ENCODE measurements at regions of chr17 and their contacts with region 1.

Region 1: GRCh38 chr17:8337802-8338752 is 1.6 kb upstream of the ODF4 start:
- DNase-seq: no peak
- ATAC-seq: peak in 1 of 2 experiments; percentile 20; a peak in 2 of 6 replicates
- H3K4me3 ChIP-seq: no peak overlapping the region
- H3K27ac ChIP-seq: no peak overlapping the region
- H3K4me1 ChIP-seq: no peaks in the 10 kb centered on the region
- CTCF ChIP-seq: no peak
- EP300 ChIP-seq: no peak
- POLR2A ChIP-seq: no peak
- RAD21 ChIP-seq: no peak

Region 2: DNA sequence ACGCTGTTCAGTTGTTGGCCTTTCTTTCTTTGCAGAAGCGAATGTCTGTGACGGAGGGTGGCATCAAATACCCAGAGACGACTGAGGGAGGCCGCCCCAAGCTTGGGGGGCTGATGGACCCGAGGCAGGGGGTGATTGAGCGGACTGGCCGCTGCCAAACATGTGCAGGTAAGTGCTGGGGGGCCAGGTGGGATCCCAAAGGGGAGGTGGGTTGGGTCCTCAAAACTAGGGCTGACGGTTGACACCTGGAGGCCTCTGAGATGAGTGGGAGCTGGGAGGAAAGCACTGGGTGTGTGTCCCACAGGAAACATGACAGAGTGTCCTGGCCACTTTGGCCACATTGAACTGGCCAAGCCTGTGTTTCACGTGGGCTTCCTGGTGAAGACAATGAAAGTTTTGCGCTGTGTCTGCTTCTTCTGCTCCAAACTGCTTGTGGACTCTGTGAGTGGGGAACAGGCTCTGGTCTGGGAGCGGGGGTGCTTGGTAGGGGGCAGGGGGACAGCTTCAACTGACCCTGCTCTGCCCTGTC is 842.1 kb before region 1 on chr17:
- CTCF ChIA-PET with region 1: no interaction called
- POLR2A ChIA-PET with region 1: no interaction called
- DNase-seq: no peak
- ATAC-seq: no peak
- H3K4me3 ChIP-seq: no peak overlapping the region
- H3K27ac ChIP-seq: no peak overlapping the region
- H3K4me1 ChIP-seq: peaks cover 7% of the 10 kb centered on the region; the same call in 1 of the 3 replicates
- CTCF ChIP-seq: no peak
- EP300 ChIP-seq: no peak
- POLR2A ChIP-seq: no peak
- RAD21 ChIP-seq: no peak

Region 3: GRCh38 chr17:8255499-8255898 is 82.6 kb before region 1 on chr17:
- CTCF ChIA-PET with region 1: no interaction called
- POLR2A ChIA-PET with region 1: no interaction called
- DNase-seq: peak; percentile 47
- ATAC-seq: peak; percentile 80 to 87
- H3K4me3 ChIP-seq: no peak overlapping the region
- H3K27ac ChIP-seq: no peak overlapping the region
- H3K4me1 ChIP-seq: peaks cover 2% of the 10 kb centered on the region
- CTCF ChIP-seq: no peak
- EP300 ChIP-seq: no peak
- POLR2A ChIP-seq: no peak
- RAD21 ChIP-seq: no peak

Region 4: DNA sequence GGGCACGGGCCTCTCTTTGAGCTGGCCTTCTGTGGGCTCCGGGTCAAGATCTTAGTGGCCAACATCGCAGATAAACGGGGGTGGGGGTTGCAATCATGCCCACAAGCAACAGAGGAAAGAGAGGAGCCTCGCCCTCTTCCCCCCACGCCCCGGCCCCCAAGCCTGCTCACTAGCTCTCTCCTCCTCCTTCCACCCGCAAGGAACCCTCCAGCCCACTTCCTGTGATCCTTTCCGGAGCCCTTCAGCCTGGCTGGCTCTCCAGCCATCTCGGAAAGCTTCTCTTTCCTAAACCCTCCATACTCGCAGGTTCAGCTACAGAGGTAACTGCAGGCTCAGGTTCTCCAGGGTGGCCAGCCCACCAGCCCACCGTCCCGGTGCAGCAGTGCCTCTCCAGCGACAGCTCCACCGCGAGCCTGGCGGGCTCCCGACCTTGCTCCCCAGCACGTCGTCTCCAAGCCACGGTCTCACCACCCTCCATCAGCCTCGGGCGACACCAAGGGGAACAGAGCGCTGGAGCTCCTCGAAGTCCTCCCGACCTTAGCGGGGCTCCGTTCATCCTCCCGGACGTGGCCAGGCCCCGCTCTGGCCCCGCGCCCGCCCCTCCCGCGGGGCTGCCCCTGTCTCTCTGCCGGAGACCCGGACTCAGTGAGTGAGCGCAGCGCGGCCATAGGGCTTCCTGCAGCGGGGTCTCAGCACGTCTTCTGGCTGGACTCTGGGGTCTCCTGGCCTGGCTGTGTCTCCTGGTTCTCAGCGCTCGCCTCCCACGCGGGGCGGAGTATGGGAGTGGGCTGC is 11.4 kb before region 1 on chr17:
- CTCF ChIA-PET with region 1: interaction called, 16 read pairs
- POLR2A ChIA-PET with region 1: no interaction called
- DNase-seq: no peak
- ATAC-seq: peak; percentile 10 to 54; a peak in 3 of 6 replicates
- H3K4me3 ChIP-seq: no peak overlapping the region
- H3K27ac ChIP-seq: no peak overlapping the region
- H3K4me1 ChIP-seq: no peaks in the 10 kb centered on the region
- CTCF ChIP-seq: no peak
- EP300 ChIP-seq: no peak
- POLR2A ChIP-seq: no peak
- RAD21 ChIP-seq: no peak

Region 5: DNA sequence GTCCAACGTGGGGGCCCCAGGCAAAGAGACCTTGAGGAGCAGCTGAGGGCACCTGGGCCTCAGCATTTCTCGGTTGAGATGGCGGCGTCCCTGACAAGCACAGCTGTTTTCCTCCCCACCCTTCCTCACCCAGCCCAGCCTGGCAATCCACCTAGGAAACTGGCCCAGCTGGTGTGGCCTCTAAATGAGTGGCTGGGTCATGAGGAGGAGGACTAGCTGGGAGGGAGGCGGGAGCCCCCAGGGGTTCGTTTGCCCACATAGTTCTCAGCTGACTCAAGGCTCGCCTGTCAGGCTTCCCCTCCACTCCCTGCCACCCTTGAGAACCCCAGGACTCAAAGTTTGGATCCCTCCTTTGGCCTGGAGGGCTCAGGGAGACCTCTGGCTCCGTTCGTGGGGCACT is 53.6 kb after region 1 on chr17:
- CTCF ChIA-PET with region 1: no interaction called
- POLR2A ChIA-PET with region 1: no interaction called
- DNase-seq: no peak
- ATAC-seq: peak; percentile 16 to 19; a peak in 3 of 6 replicates
- H3K4me3 ChIP-seq: no peak overlapping the region
- H3K27ac ChIP-seq: no peak overlapping the region
- H3K4me1 ChIP-seq: peaks cover 6% of the 10 kb centered on the region; the same call in 1 of the 3 replicates
- CTCF ChIP-seq: no peak
- EP300 ChIP-seq: no peak
- POLR2A ChIP-seq: no peak
- RAD21 ChIP-seq: no peak

Region 6: GRCh38 chr17:9072696-9073339 is 734.7 kb after region 1 on chr17:
- CTCF ChIA-PET with region 1: no interaction called
- POLR2A ChIA-PET with region 1: no interaction called
- DNase-seq: no peak
- ATAC-seq: no peak
- H3K4me3 ChIP-seq: no peak overlapping the region
- H3K27ac ChIP-seq: no peak overlapping the region
- H3K4me1 ChIP-seq: no peaks in the 10 kb centered on the region
- CTCF ChIP-seq: no peak
- EP300 ChIP-seq: no peak
- POLR2A ChIP-seq: no peak
- RAD21 ChIP-seq: no peak

Measured in A549 (cell line).